GM12878 (cell line): ENCODE measurements at regions of chr13 and their contacts with region 1.

Region 1: GRCh38 chr13:79998381-79998880 is 342.5 kb downstream of the SPRY2 start:
- DNase-seq: no peak
- ATAC-seq: no peak
- H3K4me3 ChIP-seq: no peak overlapping the region
- H3K27ac ChIP-seq: no peak overlapping the region
- H3K4me1 ChIP-seq: no peaks in the 10 kb centered on the region
- H3K27me3 ChIP-seq: no peaks in the 10 kb centered on the region
- CTCF ChIP-seq: no peak
- EP300 ChIP-seq: no peak
- POLR2A ChIP-seq: no peak
- RAD21 ChIP-seq: no peak

Region 2: GRCh38 chr13:79775830-79776229 is 222.6 kb before region 1 on chr13:
- CTCF ChIA-PET with region 1: interaction called, 3 read pairs
- POLR2A ChIA-PET with region 1: no interaction called
- RAD21 ChIA-PET with region 1: no interaction called
- SMC1A ChIA-PET with region 1: interaction called, 4 read pairs
- in situ Hi-C with region 1: no loop called
- intact Hi-C with region 1: loop called (anchors 5 kb)
- DNase-seq: no peak
- ATAC-seq: peak; percentile 86
- H3K4me3 ChIP-seq: no peak overlapping the region
- H3K27ac ChIP-seq: no peak overlapping the region
- H3K4me1 ChIP-seq: no peaks in the 10 kb centered on the region
- H3K27me3 ChIP-seq: no peaks in the 10 kb centered on the region
- CTCF ChIP-seq: peak; percentile 60 to 78 (median 65)
- EP300 ChIP-seq: no peak
- POLR2A ChIP-seq: no peak
- RAD21 ChIP-seq: peak; percentile 94